ENCODE measurements at regions of chr16 and their contacts with region 1.

Region 1: DNA sequence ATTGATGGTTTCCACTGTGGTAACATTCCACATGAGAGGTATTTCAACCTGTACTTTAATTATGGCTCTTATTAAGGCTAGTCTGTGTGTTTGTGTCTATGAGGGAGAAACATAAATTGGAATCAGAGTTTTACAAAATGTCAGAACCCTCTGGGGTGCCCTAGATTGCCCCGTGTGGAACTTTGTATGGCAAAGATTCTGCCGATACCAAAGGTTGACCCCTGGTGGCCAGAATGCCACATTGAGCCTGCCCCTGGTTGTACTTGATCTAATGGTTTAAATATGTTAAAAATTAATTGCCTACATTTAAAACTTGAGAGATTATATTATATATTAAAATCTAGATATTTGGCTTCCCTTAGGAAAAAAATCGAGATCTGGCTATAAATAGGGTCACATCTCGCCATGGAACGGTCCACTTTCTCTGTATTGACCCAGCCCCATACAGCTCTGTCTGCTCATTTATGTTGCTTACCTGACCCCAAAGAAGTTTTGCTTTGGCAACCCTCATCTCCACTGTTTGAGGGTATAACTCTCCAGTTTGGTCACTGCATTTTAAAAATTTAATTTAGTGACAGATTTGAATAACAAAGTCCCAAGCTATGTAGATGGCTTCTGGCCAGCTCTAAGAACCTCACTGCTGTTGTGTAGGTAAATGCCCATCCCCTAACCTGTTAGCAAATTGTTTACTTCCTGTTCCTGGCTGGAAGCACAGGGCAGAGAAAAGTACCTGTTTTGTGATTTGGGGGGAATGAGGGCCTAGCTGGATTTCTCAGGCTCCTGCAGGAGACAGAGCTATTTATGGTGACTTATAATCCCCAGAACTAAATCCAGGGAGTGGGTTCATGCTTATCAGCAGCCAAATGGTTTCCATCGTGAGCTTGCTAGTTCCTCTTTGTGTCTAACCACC is 95.0 kb downstream of the PLCG2 start:
- DNase-seq: peak; percentile 83
- H3K4me3 Mint-ChIP-seq: no peak overlapping the region
- H3K27ac Mint-ChIP-seq: no peak overlapping the region
- H3K4me1 Mint-ChIP-seq: no peaks in the 10 kb centered on the region
- H3K27me3 Mint-ChIP-seq: peaks cover 52% of the 10 kb centered on the region
- CTCF ChIP-seq: peak; percentile 89

Region 2: GRCh38 chr16:81767987-81768592 is 106.0 kb before region 1 on chr16:
- CTCF ChIA-PET with region 1: no interaction called
- intact Hi-C with region 1: loop called (anchors 5 kb)
- DNase-seq: peak; percentile 54
- H3K4me3 Mint-ChIP-seq: peak overlapping the region; percentile 16
- H3K27ac Mint-ChIP-seq: peak overlapping the region; percentile 84
- H3K4me1 Mint-ChIP-seq: peaks cover 11% of the 10 kb centered on the region
- H3K27me3 Mint-ChIP-seq: peaks cover 81% of the 10 kb centered on the region
- CTCF ChIP-seq: no peak

Region 3: DNA sequence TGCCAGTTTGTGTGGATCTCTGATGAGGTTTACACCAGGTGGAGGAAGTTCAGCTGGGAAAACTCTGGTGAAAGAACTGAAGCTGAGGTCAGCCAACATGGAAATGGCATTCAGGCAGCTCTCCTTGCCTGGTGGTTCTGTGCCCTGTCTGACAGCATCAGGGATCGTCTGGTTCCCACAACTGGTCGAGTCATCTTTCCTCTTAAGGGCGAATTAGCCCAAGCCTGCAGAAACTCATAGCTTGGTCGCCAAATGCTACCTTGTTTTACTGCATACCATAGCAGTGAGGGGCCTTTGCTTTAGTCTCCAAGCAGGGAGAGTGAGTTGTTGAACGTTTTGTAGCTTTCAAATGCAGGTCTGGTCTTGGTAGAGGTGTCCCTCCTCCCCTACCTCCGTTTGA is 87.8 kb before region 1 on chr16:
- CTCF ChIA-PET with region 1: no interaction called
- intact Hi-C with region 1: loop called (anchors 5 kb)
- DNase-seq: peak; percentile 29
- H3K4me3 Mint-ChIP-seq: no peak overlapping the region
- H3K27ac Mint-ChIP-seq: no peak overlapping the region
- H3K4me1 Mint-ChIP-seq: peaks cover 28% of the 10 kb centered on the region
- H3K27me3 Mint-ChIP-seq: peaks cover 74% of the 10 kb centered on the region
- CTCF ChIP-seq: no peak

Measured in Calu3 (cell line).